ENCODE measurements at regions of chr9 and their contacts with region 1.

Region 1: GRCh38 chr9:114945616-114946412 is 15.4 kb upstream of the TNFSF8 start:
- DNase-seq: no peak
- ATAC-seq: no peak
- H3K4me3 ChIP-seq: no peak overlapping the region
- H3K4me3 Mint-ChIP-seq: no peak overlapping the region
- H3K27ac ChIP-seq: no peak overlapping the region
- H3K27ac Mint-ChIP-seq: no peak overlapping the region
- H3K4me1 ChIP-seq: no peaks in the 10 kb centered on the region
- H3K4me1 Mint-ChIP-seq: peaks cover 5 to 23% (median 15%) of the 10 kb centered on the region in 7 donors
- H3K27me3 ChIP-seq: no peaks in the 10 kb centered on the region
- H3K27me3 Mint-ChIP-seq: peaks cover 0 to 3% (median 0%) of the 10 kb centered on the region in 5 donors

Region 2: GRCh38 chr9:114889802-114890251 is 56.0 kb before region 1 on chr9:
- CTCF ChIA-PET with region 1: no interaction called
- POLR2A ChIA-PET with region 1: no interaction called
- intact Hi-C with region 1: loop called in 1 of 2 experiments (anchors 10 kb)
- DNase-seq: no peak
- ATAC-seq: peak; percentile 28
- H3K4me3 ChIP-seq: no peak overlapping the region
- H3K4me3 Mint-ChIP-seq: peak overlapping the region in 3 of 10 donors; percentile 3 to 45 (median 21)
- H3K27ac ChIP-seq: no peak overlapping the region
- H3K27ac Mint-ChIP-seq: peak overlapping the region in 4 of 9 donors; percentile 53 to 83 (median 67)
- H3K4me1 ChIP-seq: peaks cover 34 to 40% of the 10 kb centered on the region in 2 donors
- H3K4me1 Mint-ChIP-seq: peaks cover 42 to 68% (median 51%) of the 10 kb centered on the region in 7 donors
- H3K27me3 ChIP-seq: no peaks in the 10 kb centered on the region
- H3K27me3 Mint-ChIP-seq: no peaks in the 10 kb centered on the region

Region 3: DNA sequence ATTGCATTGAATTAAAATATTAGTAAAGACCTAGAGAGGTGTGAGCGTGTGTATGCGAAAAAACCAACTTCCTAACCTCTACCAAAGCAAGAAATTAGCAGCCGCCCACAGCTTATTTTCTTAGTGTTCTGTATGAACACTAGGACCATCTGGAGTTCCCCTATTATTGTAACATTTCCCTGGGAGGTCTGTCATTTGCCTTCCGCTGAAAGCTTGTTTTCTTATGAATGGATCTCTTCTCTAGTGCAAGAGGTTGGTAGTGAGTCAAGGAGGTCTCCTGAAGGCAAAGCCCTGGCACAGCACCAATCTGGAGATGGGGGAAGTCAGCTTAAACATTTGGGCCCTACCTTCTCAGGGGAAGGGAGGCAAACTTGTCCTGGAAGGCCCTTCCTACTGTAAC is 26.2 kb before region 1 on chr9:
- CTCF ChIA-PET with region 1: no interaction called
- POLR2A ChIA-PET with region 1: no interaction called
- intact Hi-C with region 1: no loop called
- DNase-seq: no peak
- ATAC-seq: no peak
- H3K4me3 ChIP-seq: no peak overlapping the region
- H3K4me3 Mint-ChIP-seq: peak overlapping the region in 5 of 10 donors; percentile 23 to 97 (median 41)
- H3K27ac ChIP-seq: no peak overlapping the region
- H3K27ac Mint-ChIP-seq: peak overlapping the region in 8 of 9 donors; percentile 24 to 83 (median 40)
- H3K4me1 ChIP-seq: peaks cover 40 to 49% of the 10 kb centered on the region in 2 donors
- H3K4me1 Mint-ChIP-seq: peaks cover 41 to 100% (median 94%) of the 10 kb centered on the region in 7 donors
- H3K27me3 ChIP-seq: no peaks in the 10 kb centered on the region
- H3K27me3 Mint-ChIP-seq: no peaks in the 10 kb centered on the region

Region 4: GRCh38 chr9:115000217-115000639 is 54.4 kb after region 1 on chr9:
- CTCF ChIA-PET with region 1: no interaction called
- POLR2A ChIA-PET with region 1: no interaction called
- intact Hi-C with region 1: no loop called
- DNase-seq: peak in 1 of 9 donors; percentile 42
- ATAC-seq: no peak
- H3K4me3 ChIP-seq: no peak overlapping the region
- H3K4me3 Mint-ChIP-seq: no peak overlapping the region
- H3K27ac ChIP-seq: no peak overlapping the region
- H3K27ac Mint-ChIP-seq: no peak overlapping the region
- H3K4me1 ChIP-seq: peaks cover 0 to 3% of the 10 kb centered on the region in 2 donors
- H3K4me1 Mint-ChIP-seq: peaks cover 0 to 22% (median 13%) of the 10 kb centered on the region in 7 donors
- H3K27me3 ChIP-seq: no peaks in the 10 kb centered on the region
- H3K27me3 Mint-ChIP-seq: peaks cover 0 to 4% (median 3%) of the 10 kb centered on the region in 5 donors

Measured in naive thymus-derived CD4-positive, alpha-beta T cell (primary cell).